GM10248 (cell line): ENCODE measurements at regions of chr16 and their contacts with region 1.

Region 1: GRCh38 chr16:10504404-10504885 is 76.0 kb downstream of the EMP2 start:
- DNase-seq: no peak
- CTCF ChIP-seq: no peak

Region 2: DNA sequence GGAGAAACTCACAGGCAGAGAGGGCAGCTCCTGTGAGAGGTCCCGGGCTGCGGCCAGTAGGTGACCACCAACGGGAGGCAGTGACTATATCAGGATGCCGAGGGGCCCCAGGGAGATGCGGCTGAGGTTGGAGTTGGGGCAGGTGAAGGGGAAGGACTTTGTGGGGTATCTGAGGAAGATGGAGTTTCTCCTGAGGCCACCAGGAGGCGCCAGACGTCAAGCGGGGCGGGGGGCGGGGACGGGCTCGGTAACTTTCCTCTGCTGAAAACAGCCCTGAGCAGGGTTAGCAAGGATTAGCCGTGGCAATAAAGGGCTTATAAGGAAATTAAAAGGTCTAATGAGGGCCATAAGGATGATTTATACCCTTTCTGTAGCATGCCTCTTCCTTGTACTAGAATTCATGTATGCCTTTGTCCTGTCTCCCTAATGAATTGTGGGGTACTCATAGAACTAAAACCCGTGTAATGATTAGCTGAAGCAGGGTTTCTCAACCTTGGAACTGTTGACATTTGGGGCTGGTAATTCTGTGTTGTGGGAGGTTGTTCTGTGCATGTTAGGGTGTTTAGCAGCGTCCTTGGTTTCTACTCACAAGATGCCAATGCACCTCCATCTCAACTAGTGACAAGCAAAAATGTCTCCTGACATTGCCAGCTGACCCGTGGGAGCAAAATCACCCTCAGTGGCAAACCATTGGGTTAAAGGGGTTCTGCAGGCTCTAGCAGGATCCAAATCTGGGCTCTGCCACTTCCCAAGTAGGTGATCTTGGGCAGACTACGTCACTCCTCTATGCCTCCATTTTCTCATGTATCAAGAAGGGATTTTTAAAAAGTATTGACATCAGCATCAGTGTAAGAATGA is 247.4 kb before region 1 on chr16:
- CTCF ChIA-PET with region 1: interaction called, 108 read pairs
- POLR2A ChIA-PET with region 1: no interaction called
- DNase-seq: peak; percentile 80
- CTCF ChIP-seq: peak; percentile 42

Region 3: DNA sequence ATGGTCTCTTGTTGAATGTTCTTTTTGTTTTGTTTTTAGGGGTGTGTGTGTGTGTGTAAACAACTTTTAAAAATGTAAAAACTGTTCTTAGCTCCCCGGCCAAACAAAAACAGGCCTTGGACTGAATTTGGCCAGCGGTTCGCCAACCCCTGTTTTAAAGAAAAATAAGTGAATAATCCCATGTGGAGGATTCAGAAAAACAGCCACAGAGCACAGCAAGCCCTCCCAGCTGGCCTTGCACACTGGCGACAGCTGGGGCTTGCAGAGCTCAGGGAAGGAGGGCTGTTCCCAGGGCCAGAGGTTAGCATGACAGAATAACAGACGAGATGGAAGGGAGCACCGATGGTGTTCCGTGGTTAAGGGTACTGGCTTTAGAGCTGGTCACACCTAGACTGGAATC is 36.9 kb after region 1 on chr16:
- CTCF ChIA-PET with region 1: no interaction called
- POLR2A ChIA-PET with region 1: no interaction called
- DNase-seq: no peak
- CTCF ChIP-seq: no peak